ENCODE measurements at regions of chr21 and their contacts with region 1.

Region 1: GRCh38 chr21:26850108-26850643 is 5.0 kb upstream of the ADAMTS1 start:
- DNase-seq: peak in 1 of 2 donors; percentile 76
- H3K4me3 ChIP-seq: no peak overlapping the region
- H3K27ac ChIP-seq: no peak overlapping the region
- H3K4me1 ChIP-seq: peaks cover 0 to 29% (median 20%) of the 10 kb centered on the region in 4 donors
- H3K27me3 ChIP-seq: peaks cover 0 to 25% (median 15%) of the 10 kb centered on the region in 3 donors
- CTCF ChIP-seq: peak in 4 of 7 experiments; percentile 48 to 69 (median 63)
- EP300 ChIP-seq: no peak
- POLR2A ChIP-seq: no peak

Region 2: DNA sequence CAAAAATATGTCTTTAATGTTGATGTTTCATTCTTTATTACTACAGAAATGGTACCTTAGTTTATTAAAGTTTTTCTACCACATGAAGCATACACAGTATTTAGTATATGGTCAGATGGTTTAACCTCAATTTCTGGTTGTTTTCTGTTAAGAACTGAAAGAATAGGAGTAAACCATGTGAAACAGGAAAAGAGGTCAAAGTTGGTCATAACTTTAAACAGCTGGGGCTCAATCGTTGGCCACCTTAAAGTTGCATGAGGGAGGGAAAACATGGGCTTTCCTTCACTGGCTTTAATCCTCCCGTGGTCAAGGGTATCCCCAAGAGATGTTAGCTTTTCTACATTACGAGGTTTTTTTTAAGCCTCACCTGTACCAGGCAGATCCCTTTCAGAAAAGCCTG is 600.0 kb after region 1 on chr21:
- intact Hi-C with region 1: no loop called
- DNase-seq: no peak
- H3K4me3 ChIP-seq: no peak overlapping the region
- H3K27ac ChIP-seq: no peak overlapping the region
- H3K4me1 ChIP-seq: no peaks in the 10 kb centered on the region
- H3K27me3 ChIP-seq: no peaks in the 10 kb centered on the region
- CTCF ChIP-seq: no peak
- EP300 ChIP-seq: no peak
- POLR2A ChIP-seq: no peak

Region 3: DNA sequence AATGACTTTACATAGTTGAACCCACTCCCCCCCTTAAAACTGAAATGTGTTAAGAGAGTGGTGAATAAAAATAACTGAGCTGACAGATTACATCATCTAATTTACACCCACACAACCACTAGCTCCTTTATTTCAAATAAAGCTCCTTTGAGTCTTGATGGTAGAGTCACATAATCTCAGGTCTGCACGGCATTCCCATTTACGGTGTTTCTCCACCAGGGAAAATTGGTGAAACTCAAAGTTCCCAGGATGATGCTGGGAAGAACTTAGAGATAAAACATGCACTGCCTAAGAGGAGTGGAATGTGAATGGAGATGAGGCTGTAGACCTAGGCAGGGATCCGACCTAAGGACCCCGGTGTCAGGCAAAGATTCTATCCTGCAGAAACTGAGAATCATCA is 844.5 kb after region 1 on chr21:
- intact Hi-C with region 1: loop called (anchors 5 kb)
- DNase-seq: no peak
- H3K4me3 ChIP-seq: no peak overlapping the region
- H3K27ac ChIP-seq: no peak overlapping the region
- H3K4me1 ChIP-seq: no peaks in the 10 kb centered on the region
- H3K27me3 ChIP-seq: no peaks in the 10 kb centered on the region
- CTCF ChIP-seq: no peak
- EP300 ChIP-seq: no peak
- POLR2A ChIP-seq: no peak

Region 4: DNA sequence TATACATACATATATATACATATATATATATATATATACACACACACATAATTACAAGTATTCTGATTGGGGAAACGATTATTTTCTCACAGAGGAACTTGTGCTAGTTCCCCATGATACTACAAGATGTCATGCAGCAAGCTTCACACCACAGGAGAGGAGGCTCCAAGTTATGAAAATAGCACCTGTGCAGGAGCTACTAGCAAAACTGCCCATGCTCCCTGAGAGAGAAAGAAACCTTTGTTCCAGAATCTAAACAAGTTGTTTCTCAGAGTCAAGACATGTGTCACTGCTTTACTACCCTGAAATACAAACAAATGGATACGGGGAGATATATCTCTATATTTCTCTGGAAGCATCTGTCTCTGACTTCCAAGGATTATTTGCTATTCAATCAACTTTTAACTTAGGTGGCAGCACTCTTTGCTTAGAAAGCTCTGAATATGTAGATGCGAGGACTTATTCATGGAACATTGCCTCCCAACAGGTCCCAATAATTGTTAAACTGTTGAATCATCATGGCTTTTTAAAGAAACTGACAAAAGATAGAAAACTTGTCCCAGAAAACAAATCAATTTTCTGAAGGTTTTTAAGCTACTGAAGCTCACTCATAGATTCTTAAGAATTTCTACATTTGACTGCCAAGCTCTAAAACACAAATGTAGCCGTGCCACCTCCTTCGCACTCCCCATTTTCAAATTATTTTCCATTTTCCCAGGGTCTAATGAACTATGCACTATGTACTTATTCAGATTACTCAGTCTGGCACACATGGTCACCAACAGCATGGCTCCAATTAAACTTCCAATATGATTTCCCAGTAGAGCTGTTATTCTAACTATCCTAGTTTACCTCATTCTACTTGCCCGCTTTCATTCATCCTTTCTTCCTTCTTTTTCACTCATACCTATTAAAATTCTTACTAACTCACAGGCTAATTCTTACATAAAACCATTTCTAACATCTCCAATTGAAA is 1213.4 kb after region 1 on chr21:
- intact Hi-C with region 1: loop called (anchors 10 kb)
- DNase-seq: no peak
- H3K4me3 ChIP-seq: no peak overlapping the region
- H3K27ac ChIP-seq: no peak overlapping the region
- H3K4me1 ChIP-seq: peaks cover 0 to 6% (median 0%) of the 10 kb centered on the region in 4 donors
- H3K27me3 ChIP-seq: no peaks in the 10 kb centered on the region
- CTCF ChIP-seq: no peak
- EP300 ChIP-seq: no peak
- POLR2A ChIP-seq: no peak

Region 5: GRCh38 chr21:28342212-28342810 is 1492.1 kb after region 1 on chr21:
- intact Hi-C with region 1: loop called (anchors 10 kb)
- DNase-seq: no peak
- H3K4me3 ChIP-seq: no peak overlapping the region
- H3K27ac ChIP-seq: no peak overlapping the region
- H3K4me1 ChIP-seq: peaks cover 0 to 7% (median 0%) of the 10 kb centered on the region in 4 donors
- H3K27me3 ChIP-seq: no peaks in the 10 kb centered on the region
- CTCF ChIP-seq: no peak
- EP300 ChIP-seq: no peak
- POLR2A ChIP-seq: no peak

Region 6: GRCh38 chr21:28745131-28746016 is 1895.2 kb after region 1 on chr21:
- intact Hi-C with region 1: loop called (anchors 10 kb)
- DNase-seq: peak; percentile 66 to 94
- H3K4me3 ChIP-seq: peak overlapping the region; percentile 37 to 54 (median 48)
- H3K27ac ChIP-seq: peak overlapping the region; percentile 56 to 79 (median 68)
- H3K4me1 ChIP-seq: peaks cover 0 to 17% (median 10%) of the 10 kb centered on the region in 4 donors
- H3K27me3 ChIP-seq: no peaks in the 10 kb centered on the region
- CTCF ChIP-seq: peak in 5 of 7 experiments; percentile 73 to 97 (median 83)
- EP300 ChIP-seq: no peak
- POLR2A ChIP-seq: no peak

Measured in stomach (tissue), 19 donors.